ENCODE measurements at regions of chr1 and their contacts with region 1.

Region 1: GRCh38 chr1:151156515-151156819 is at the start of gene TNFAIP8L2:
- DNase-seq: peak; percentile 87
- total RNA-seq, gene TNFAIP8L2: 3.0 to 4.2 TPM

Region 2: DNA sequence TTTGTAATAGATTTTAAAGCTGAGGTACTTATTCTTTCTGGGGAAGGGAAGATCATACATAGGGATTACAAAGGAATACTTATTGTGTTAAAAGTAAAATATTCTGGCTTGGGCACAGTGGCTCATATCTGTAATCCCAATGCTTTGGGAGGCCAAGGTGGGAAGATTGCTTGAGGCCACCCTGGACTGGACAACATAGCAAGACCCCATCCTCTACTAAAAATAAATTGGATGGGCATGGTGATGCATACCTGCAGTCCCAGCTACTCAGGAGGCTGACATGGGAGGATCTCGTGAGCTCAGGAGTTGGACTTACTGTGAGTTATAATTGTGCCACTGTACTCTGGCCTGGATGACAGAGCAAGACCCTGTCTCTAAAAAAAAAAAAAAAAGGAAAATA is 58.3 kb before region 1 on chr1:
- intact Hi-C with region 1: loop called (anchors 5 kb)
- DNase-seq: peak; percentile 28

Region 3: GRCh38 chr1:151106894-151107293 is 49.6 kb before region 1 on chr1:
- intact Hi-C with region 1: loop called in 1 of 2 experiments (anchors 5 kb)
- DNase-seq: no peak

Region 4: GRCh38 chr1:151210830-151211229 is 54.4 kb after region 1 on chr1:
- intact Hi-C with region 1: no loop called
- DNase-seq: no peak

Region 5: DNA sequence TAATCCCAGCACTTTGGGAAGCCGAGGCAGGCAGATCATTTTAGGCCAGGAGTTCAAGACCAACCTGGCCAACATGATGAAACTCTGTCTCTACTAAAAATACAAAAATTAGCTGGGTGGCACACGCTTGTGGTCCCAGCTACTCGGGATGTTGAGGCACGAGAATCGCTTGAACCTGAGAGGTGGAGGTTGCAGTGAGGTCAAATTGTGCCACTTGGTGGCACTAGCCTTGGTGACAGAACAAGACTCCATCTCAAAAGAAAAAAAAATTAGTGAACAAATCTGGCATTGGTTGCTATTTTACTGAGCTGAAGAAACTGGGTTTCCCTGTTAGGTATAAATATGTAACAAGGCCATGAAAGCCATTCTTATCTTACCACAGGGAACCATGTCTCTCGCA is 71.2 kb after region 1 on chr1:
- intact Hi-C with region 1: no loop called
- DNase-seq: no peak

Measured in posterior vena cava (tissue), 2 donors.